Posterior vena cava (tissue), 2 donors: ENCODE measurements at regions of chr11 and their contacts with region 1.

Region 1: DNA sequence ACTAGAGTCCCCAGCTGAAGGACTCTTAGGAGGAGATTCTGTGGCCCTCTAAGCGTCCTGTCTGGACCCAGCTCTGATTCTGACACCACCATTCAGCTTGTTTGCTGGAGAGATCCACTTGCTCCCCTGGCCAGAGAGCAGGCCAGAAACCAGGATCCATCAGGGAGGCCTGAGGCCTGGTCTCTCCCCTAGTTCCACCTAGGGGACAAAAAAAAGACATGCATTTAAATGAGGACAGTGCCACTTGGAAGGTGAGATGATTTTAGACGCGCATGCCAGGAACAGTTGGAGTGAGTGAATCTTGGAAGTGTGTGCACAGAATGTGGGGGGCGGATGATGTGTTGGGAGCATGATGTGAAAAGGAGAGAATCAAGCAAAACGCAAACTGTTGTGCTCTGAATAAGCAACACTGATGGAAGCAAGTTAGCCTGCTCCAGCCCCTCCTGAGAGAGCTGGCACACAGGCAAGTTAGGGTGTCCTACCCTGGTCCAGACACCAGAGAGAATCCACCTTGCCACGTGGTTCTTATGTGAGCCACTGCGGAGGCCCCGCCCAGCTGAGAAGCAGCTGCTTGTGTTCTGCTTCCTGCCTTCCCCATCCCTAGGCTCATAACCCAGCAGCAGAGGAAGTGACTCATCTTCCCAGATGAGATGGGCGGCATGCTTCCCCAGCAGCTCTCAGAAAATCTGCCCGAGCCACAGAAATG is 8.0 kb upstream of the SLCO2B1 start:
- DNase-seq: peak; percentile 91

Region 2: GRCh38 chr11:75204685-75205563 is 62.1 kb after region 1 on chr11:
- intact Hi-C with region 1: loop called in 1 of 2 experiments (anchors 5 kb)
- DNase-seq: peak; percentile 96

Region 3: GRCh38 chr11:75241036-75241905 is 98.4 kb after region 1 on chr11:
- intact Hi-C with region 1: loop called in 1 of 2 experiments (anchors 5 kb)
- DNase-seq: peak; percentile 96

Region 4: GRCh38 chr11:75248690-75249268 is 105.9 kb after region 1 on chr11:
- intact Hi-C with region 1: loop called (anchors 1 to 5 kb)
- DNase-seq: peak; percentile 97